ENCODE measurements at regions of chr19 and their contacts with region 1.

Region 1: DNA sequence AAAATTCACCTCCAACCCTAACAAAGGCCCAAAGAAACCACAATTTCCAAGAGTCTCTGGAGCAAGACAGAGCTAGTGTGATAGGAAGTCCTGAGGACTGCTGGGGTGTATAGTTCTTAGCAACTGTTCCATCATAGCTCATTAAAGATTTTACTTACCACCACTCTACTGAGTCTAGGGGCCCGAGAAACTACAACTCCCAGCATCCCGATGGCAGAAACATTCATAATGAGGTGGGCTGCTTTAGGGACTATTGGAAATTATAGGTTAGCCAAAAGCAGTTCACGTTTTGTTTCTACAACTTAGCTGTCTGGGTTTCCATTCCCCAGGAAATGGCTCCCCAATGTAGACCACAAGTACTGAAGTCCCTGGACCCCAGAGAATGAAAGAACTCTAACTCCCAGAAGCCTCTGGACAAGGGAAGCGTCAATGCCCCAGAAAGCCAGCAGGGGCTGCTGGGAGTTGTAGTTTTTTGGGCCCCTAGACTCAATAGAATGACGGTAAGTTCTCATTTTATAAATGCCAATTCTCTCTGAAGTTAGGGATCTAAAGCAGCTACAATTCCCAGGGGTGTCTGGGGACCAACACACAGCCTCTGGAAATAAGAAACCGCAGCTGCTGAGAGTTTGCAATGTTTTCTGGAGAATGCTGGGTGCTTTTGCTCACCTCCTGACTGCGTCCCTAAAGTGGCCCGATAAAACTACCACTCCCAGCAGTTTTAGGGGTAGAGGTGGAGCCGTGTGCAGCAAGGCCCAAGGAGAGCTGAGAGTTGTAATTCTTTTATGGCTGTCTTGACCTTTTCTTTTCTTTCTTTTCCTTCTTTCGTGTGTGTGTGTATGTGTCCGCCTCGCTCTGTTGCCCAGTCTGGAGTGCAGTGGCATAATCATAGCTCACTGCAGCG is 11.1 kb downstream of the FTL start:
- DNase-seq: peak; percentile 47
- H3K4me3 Mint-ChIP-seq: no peak overlapping the region
- H3K27ac Mint-ChIP-seq: no peak overlapping the region
- H3K4me1 Mint-ChIP-seq: peaks cover 10% of the 10 kb centered on the region
- H3K27me3 Mint-ChIP-seq: no peaks in the 10 kb centered on the region

Region 2: GRCh38 chr19:48752498-48753365 is 223.5 kb before region 1 on chr19 and contains the start of gene FUT1:
- CTCF ChIA-PET with region 1: no interaction called
- POLR2A ChIA-PET with region 1: no interaction called
- DNase-seq: peak; percentile 26
- H3K4me3 Mint-ChIP-seq: peak within 1 kb of the TSS; percentile 72
- H3K27ac Mint-ChIP-seq: peak within 1 kb of the TSS; percentile 57
- H3K4me1 Mint-ChIP-seq: peaks cover 23% of the 10 kb centered on the region
- H3K27me3 Mint-ChIP-seq: peaks cover 26% of the 10 kb centered on the region
- total RNA-seq, gene FUT1: 0.10 to 0.23 TPM

Region 3: DNA sequence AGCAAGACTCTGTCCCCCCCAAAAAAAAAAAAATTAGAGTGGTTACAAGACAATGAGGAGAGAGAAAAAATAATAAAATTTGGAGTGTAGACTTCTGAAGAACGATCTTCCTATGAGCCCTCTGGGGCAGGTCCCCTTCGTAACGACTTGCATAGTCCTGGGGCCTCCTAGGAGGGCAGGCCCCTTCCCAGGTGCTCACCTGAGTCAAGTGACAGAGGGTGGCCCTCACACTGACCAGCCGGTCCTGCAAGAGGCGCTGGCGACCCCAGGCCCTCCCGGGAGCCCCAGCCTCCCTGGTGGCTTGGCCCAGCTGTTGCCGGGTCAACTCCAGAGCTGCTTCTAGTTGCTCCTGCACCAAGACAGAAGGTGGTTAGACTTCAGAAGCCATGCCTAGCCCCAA is 122.7 kb before region 1 on chr19:
- CTCF ChIA-PET with region 1: no interaction called
- POLR2A ChIA-PET with region 1: no interaction called
- DNase-seq: no peak
- H3K4me3 Mint-ChIP-seq: no peak overlapping the region
- H3K27ac Mint-ChIP-seq: no peak overlapping the region
- H3K4me1 Mint-ChIP-seq: no peaks in the 10 kb centered on the region
- H3K27me3 Mint-ChIP-seq: no peaks in the 10 kb centered on the region

Region 4: DNA sequence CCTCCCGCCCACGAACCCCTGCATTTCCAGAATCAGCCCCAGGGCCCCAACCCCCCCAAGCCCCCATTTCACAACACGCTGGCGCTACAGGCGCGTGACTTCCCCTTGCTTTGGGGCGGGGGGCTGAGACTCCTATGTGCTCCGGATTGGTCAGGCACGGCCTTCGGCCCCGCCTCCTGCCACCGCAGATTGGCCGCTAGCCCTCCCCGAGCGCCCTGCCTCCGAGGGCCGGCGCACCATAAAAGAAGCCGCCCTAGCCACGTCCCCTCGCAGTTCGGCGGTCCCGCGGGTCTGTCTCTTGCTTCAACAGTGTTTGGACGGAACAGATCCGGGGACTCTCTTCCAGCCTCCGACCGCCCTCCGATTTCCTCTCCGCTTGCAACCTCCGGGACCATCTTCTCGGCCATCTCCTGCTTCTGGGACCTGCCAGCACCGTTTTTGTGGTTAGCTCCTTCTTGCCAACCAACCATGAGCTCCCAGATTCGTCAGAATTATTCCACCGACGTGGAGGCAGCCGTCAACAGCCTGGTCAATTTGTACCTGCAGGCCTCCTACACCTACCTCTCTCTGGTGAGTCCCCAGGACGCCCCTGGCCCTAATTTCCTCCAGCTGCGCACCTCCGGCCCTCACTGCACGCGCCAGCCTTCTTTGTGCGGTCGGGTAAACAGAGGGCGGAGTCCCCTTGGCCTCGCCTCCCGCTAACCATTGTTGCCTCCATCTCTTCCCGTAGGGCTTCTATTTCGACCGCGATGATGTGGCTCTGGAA is 11.0 kb before region 1 on chr19 and contains the start of gene FTL:
- CTCF ChIA-PET with region 1: interaction called, 15 read pairs
- POLR2A ChIA-PET with region 1: interaction called, 4 read pairs
- DNase-seq: peak; percentile 92
- H3K4me3 Mint-ChIP-seq: peak within 1 kb of the TSS; percentile 90
- H3K27ac Mint-ChIP-seq: peak within 1 kb of the TSS; percentile 97
- H3K4me1 Mint-ChIP-seq: peaks cover 70% of the 10 kb centered on the region
- H3K27me3 Mint-ChIP-seq: no peaks in the 10 kb centered on the region
- total RNA-seq, gene FTL: 683 to 880 TPM

Measured in activated CD4-positive, alpha-beta T cell treated with anti-CD3 and anti-CD28 coated beads, Interleukin-2, amount 10 ng/mL, durations not matched to agents 7 days and 5 days (primary cell).